ENCODE measurements at regions of chr18 and their contacts with region 1.

Region 1: GRCh38 chr18:6917072-6917471 is 187.6 kb downstream of the ARHGAP28 start:
- DNase-seq: no peak
- H3K4me3 ChIP-seq: no peak overlapping the region
- H3K27ac ChIP-seq: no peak overlapping the region
- H3K4me1 ChIP-seq: no peaks in the 10 kb centered on the region
- CTCF ChIP-seq: no peak

Region 2: DNA sequence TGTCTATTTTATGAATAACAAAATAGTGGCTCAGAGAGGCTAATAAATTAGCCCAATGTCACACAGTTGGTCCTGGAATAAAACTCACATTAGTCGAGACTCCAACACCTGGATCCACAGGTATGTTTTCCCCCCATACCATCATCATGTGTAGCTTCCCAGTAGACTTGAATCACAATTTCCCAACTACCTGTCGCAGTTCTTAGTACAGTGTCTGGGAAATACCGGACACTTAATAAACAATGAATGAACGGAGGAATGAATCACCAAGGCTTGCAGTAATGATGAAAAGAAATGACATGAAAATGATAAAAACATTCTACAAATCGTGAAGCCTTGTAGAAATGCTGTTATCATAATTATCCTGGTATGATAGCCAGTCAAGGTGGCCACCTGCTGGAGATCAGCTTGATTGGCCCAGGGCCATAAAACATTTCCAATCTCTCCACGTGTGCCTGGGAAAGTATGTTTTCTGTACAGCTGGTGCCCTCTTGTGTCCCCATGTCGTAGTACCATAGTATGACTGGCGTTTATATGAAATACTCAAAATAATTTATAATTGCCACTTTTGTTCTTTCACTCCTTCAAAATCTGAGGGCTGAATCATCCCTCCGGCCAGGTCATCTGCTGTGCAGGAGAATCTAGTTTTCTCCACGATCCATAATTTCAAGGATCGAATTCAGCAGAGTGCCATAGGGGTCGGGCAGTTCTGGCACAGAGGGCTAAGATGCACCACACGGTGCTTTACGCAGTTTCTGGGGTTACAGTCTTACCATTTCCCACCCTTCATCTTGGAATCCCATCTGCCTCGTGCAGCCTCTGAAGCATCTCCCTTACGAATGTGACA is 105.1 kb after region 1 on chr18:
- CTCF ChIA-PET with region 1: no interaction called
- POLR2A ChIA-PET with region 1: no interaction called
- intact Hi-C with region 1: loop called (anchors 10 kb)
- DNase-seq: peak; percentile 26
- H3K4me3 ChIP-seq: no peak overlapping the region
- H3K27ac ChIP-seq: no peak overlapping the region
- H3K4me1 ChIP-seq: no peaks in the 10 kb centered on the region
- CTCF ChIP-seq: peak; percentile 69